Common myeloid progenitor, CD34-positive (primary cell): ENCODE measurements at regions of chrX and their contacts with region 1.

Region 1: GRCh38 chrX:110407910-110408545 is 49.4 kb downstream of the RTL9 start:
- DNase-seq: peak; percentile 28 to 55 (median 47)
- H3K4me3 ChIP-seq: no peak overlapping the region
- H3K27ac ChIP-seq: no peak overlapping the region
- H3K4me1 ChIP-seq: peaks cover 0 to 2% (median 0%) of the 10 kb centered on the region in 4 experiments
- H3K27me3 ChIP-seq: peaks cover 0 to 3% (median 0%) of the 10 kb centered on the region in 5 experiments

Region 2: GRCh38 chrX:110241816-110242215 is 166.2 kb before region 1 on chrX:
- CTCF ChIA-PET with region 1: no interaction called
- POLR2A ChIA-PET with region 1: no interaction called
- DNase-seq: no peak
- H3K4me3 ChIP-seq: no peak overlapping the region
- H3K27ac ChIP-seq: no peak overlapping the region
- H3K4me1 ChIP-seq: no peaks in the 10 kb centered on the region
- H3K27me3 ChIP-seq: no peaks in the 10 kb centered on the region

Region 3: DNA sequence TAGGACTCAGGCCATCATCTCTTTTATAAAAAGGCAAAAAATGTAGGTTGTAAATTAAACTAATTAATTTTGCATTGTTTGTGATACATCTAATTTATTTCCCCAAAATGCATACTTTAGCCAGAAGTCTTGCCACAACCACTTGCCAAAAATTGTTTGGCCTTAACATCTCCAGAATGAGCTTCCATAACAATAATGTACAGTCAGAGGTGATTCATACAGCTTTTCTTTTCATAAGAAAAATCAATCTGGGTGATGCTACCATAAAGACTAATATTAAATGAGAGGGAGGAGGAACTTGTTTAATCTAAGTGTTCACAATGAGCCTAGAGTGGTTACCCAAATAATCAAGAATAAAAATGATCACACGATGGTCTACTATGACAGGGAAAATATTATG is 149.5 kb before region 1 on chrX:
- CTCF ChIA-PET with region 1: no interaction called
- POLR2A ChIA-PET with region 1: no interaction called
- DNase-seq: no peak
- H3K4me3 ChIP-seq: no peak overlapping the region
- H3K27ac ChIP-seq: no peak overlapping the region
- H3K4me1 ChIP-seq: no peaks in the 10 kb centered on the region
- H3K27me3 ChIP-seq: no peaks in the 10 kb centered on the region

Region 4: DNA sequence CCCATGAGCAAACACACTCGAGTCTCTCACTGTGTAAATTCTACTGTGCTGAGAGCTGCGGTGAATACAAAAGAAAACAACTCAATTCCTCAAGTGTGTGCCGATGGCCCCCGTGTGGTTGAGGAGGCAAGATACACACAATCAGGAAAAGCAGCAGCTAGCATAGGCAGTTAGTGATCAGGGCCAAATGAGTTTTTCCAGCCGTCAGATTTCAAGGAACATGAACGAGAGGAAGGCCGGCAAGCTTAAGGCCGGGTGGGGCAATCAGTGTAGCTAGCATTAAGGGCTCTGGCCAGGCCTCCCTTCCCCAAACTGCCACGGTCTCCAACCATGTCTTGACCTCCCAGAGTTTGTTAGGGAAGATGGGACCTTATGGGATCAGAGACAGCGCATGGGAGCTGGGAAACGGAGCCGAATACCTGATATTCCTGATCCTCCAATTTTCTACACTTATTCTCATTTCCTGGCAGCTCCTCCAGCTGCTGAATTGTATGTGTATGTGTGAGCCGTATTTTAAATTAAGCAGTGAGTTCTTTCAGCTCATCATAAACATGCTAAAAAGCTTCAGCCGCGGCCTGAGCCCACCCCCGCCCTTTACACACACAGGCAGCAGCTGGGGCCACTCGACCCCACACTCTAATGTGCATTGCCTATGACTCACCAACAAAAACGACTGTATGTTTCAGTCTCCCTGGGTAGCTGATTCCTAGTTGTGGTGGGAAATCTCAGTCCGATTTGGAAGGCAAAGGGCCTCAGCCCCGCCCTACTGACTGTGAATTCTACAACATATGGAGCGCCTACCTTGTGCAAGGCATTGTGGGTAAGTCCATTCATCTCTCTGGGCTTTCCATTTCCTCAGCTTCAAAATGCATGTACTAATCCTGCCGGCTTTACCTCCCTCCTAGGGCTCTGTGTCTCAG is 10.5 kb after region 1 on chrX:
- CTCF ChIA-PET with region 1: interaction called, 20 read pairs
- POLR2A ChIA-PET with region 1: no interaction called
- DNase-seq: peak in 2 of 3 donors; percentile 40 to 41
- H3K4me3 ChIP-seq: no peak overlapping the region
- H3K27ac ChIP-seq: no peak overlapping the region
- H3K4me1 ChIP-seq: no peaks in the 10 kb centered on the region
- H3K27me3 ChIP-seq: peaks cover 0 to 7% (median 2%) of the 10 kb centered on the region in 5 experiments

Region 5: DNA sequence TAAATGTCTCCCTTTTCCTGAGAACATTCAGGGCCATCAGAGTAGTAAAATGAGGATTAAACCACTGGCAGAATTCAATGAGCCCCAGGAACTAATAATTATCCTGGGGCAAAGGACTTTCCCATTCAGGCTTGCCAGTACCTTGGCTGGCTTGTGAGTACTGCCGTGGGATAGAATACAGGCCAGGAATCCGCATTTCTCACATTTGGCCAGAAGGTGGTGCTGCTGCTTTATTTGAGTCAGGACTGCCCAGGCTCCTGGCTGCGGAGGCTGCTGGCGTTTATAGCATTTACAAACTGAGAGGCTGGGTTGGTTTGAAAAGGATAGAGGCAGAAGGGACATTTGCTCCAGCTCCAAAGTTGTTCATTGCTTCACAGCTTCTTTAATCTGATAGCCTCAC is 42.0 kb after region 1 on chrX:
- CTCF ChIA-PET with region 1: no interaction called
- POLR2A ChIA-PET with region 1: no interaction called
- DNase-seq: peak; percentile 42 to 79 (median 69)
- H3K4me3 ChIP-seq: no peak overlapping the region
- H3K27ac ChIP-seq: no peak overlapping the region
- H3K4me1 ChIP-seq: no peaks in the 10 kb centered on the region
- H3K27me3 ChIP-seq: peaks cover 0 to 23% (median 0%) of the 10 kb centered on the region in 5 experiments